ENCODE measurements at regions of chr10 and their contacts with region 1.

Region 1: GRCh38 chr10:17257466-17258321 is 29.7 kb downstream of the VIM start:
- DNase-seq: peak; percentile 49 to 71 (median 64)
- H3K4me3 ChIP-seq: no peak overlapping the region
- H3K4me3 Mint-ChIP-seq: peak overlapping the region in 1 of 8 donors; percentile 43
- H3K27ac ChIP-seq: no peak overlapping the region
- H3K27ac Mint-ChIP-seq: peak overlapping the region in 3 of 7 donors; percentile 0 to 84 (median 67)
- H3K4me1 ChIP-seq: no peaks in the 10 kb centered on the region
- H3K4me1 Mint-ChIP-seq: peaks cover 0 to 6% (median 4%) of the 10 kb centered on the region in 4 donors
- H3K27me3 ChIP-seq: no peaks in the 10 kb centered on the region
- H3K27me3 Mint-ChIP-seq: no peaks in the 10 kb centered on the region

Region 2: GRCh38 chr10:15879058-15879457 is 1378.6 kb before region 1 on chr10:
- CTCF ChIA-PET with region 1: no interaction called
- POLR2A ChIA-PET with region 1: no interaction called
- intact Hi-C with region 1: loop called (anchors 1 kb)
- DNase-seq: peak in 4 of 5 donors; percentile 21 to 39 (median 30)
- H3K4me3 ChIP-seq: no peak overlapping the region
- H3K4me3 Mint-ChIP-seq: no peak overlapping the region
- H3K27ac ChIP-seq: no peak overlapping the region
- H3K27ac Mint-ChIP-seq: no peak overlapping the region
- H3K4me1 ChIP-seq: no peaks in the 10 kb centered on the region
- H3K4me1 Mint-ChIP-seq: no peaks in the 10 kb centered on the region
- H3K27me3 ChIP-seq: peaks cover 3% of the 10 kb centered on the region
- H3K27me3 Mint-ChIP-seq: peaks cover 33 to 52% of the 10 kb centered on the region in 2 donors

Region 3: DNA sequence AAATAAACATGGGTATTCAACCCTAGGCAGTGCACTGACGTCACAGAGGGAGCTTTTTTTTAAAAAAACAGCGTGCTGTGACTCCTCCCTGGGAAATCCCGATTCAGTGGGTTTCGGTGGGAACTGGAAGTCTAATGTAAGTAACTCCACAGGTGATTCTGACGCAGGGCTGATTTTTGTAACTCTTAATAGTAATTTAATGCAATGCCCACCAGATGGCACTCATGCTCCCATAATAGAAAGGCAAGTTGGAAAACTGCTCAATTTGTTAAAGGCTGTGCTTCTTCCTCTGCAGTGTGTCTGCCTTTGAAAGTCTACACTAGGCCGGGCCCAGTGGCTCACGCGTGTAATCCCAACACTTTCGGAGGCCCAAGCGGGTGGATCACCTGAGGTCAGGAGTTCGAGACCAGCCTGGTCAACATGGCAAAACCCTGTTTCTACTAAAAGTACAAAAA is 429.6 kb before region 1 on chr10:
- CTCF ChIA-PET with region 1: interaction called, 43 read pairs
- POLR2A ChIA-PET with region 1: no interaction called
- intact Hi-C with region 1: loop called (anchors 1 kb)
- DNase-seq: peak; percentile 67 to 73 (median 71)
- H3K4me3 ChIP-seq: no peak overlapping the region
- H3K4me3 Mint-ChIP-seq: no peak overlapping the region
- H3K27ac ChIP-seq: no peak overlapping the region
- H3K27ac Mint-ChIP-seq: peak overlapping the region in 5 of 7 donors; percentile 15 to 88 (median 68)
- H3K4me1 ChIP-seq: no peaks in the 10 kb centered on the region
- H3K4me1 Mint-ChIP-seq: peaks cover 2 to 6% (median 5%) of the 10 kb centered on the region in 4 donors
- H3K27me3 ChIP-seq: no peaks in the 10 kb centered on the region
- H3K27me3 Mint-ChIP-seq: no peaks in the 10 kb centered on the region

Region 4: GRCh38 chr10:16856567-16856966 is 401.1 kb before region 1 on chr10:
- CTCF ChIA-PET with region 1: interaction called, 12 read pairs
- POLR2A ChIA-PET with region 1: no interaction called
- intact Hi-C with region 1: no loop called
- DNase-seq: no peak
- H3K4me3 ChIP-seq: no peak overlapping the region
- H3K4me3 Mint-ChIP-seq: no peak overlapping the region
- H3K27ac ChIP-seq: no peak overlapping the region
- H3K27ac Mint-ChIP-seq: no peak overlapping the region
- H3K4me1 ChIP-seq: no peaks in the 10 kb centered on the region
- H3K4me1 Mint-ChIP-seq: no peaks in the 10 kb centered on the region
- H3K27me3 ChIP-seq: no peaks in the 10 kb centered on the region
- H3K27me3 Mint-ChIP-seq: no peaks in the 10 kb centered on the region

Region 5: GRCh38 chr10:17273403-17273802 is 15.7 kb after region 1 on chr10:
- CTCF ChIA-PET with region 1: interaction called, 10 read pairs
- POLR2A ChIA-PET with region 1: no interaction called
- intact Hi-C with region 1: no loop called
- DNase-seq: no peak
- H3K4me3 ChIP-seq: no peak overlapping the region
- H3K4me3 Mint-ChIP-seq: no peak overlapping the region
- H3K27ac ChIP-seq: no peak overlapping the region
- H3K27ac Mint-ChIP-seq: no peak overlapping the region
- H3K4me1 ChIP-seq: no peaks in the 10 kb centered on the region
- H3K4me1 Mint-ChIP-seq: no peaks in the 10 kb centered on the region
- H3K27me3 ChIP-seq: no peaks in the 10 kb centered on the region
- H3K27me3 Mint-ChIP-seq: peaks cover 6 to 11% of the 10 kb centered on the region in 2 donors

Region 6: DNA sequence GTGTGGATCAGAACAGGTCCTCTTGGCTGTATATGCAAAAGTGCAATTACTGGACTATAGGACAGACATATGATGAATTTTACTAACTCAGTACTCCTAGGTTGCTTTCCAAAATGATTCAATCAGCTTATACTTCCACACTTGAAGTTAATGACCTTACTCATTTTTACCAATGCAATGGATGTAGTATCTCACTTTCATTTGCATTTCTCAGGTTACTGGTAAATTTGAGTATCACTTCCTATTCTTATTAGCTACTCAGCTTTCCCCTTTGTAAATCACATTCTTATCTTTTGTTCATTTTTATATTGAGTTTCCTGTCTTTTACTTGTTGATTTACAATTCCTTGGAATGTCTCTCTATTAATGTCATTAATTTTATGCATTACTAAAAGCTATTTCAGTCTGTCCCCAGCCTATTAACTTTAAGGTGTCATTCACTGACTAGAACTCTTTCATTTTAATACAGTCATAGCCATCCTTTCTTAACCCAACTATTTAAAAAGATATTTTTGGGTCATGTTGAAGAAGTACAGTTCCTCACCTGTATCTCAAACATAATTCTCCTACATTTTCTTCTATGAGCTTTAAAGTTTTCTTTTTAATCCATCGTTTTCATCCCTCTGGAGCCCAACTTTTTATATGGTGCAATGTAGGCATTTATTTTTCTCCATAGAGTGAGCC is 58.9 kb after region 1 on chr10:
- CTCF ChIA-PET with region 1: no interaction called
- POLR2A ChIA-PET with region 1: no interaction called
- intact Hi-C with region 1: no loop called
- DNase-seq: no peak
- H3K4me3 ChIP-seq: no peak overlapping the region
- H3K4me3 Mint-ChIP-seq: no peak overlapping the region
- H3K27ac ChIP-seq: no peak overlapping the region
- H3K27ac Mint-ChIP-seq: no peak overlapping the region
- H3K4me1 ChIP-seq: no peaks in the 10 kb centered on the region
- H3K4me1 Mint-ChIP-seq: no peaks in the 10 kb centered on the region
- H3K27me3 ChIP-seq: no peaks in the 10 kb centered on the region
- H3K27me3 Mint-ChIP-seq: peaks cover 6 to 11% of the 10 kb centered on the region in 2 donors

Region 7: DNA sequence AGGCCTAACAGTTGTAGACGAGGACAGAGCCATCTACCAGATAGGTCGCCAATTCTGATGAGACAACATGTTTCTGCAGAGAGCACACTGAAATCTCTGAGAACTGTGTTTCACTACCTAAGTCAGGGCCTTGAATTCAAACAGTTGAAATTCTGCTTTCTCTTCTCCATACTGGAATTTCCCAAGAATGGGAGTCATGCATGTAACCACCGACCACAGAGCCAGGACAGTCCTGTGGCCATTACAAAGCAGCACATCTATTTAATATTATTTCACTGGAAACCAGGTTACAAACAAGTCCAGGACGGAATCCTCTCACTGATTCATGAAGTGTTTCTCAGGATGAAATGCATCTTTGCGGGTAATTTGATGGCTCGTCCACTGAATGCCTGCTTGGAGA is 258.7 kb after region 1 on chr10:
- CTCF ChIA-PET with region 1: no interaction called
- POLR2A ChIA-PET with region 1: no interaction called
- intact Hi-C with region 1: no loop called
- DNase-seq: no peak
- H3K4me3 ChIP-seq: no peak overlapping the region
- H3K4me3 Mint-ChIP-seq: no peak overlapping the region
- H3K27ac ChIP-seq: no peak overlapping the region
- H3K27ac Mint-ChIP-seq: no peak overlapping the region
- H3K4me1 ChIP-seq: peaks cover 7% of the 10 kb centered on the region
- H3K4me1 Mint-ChIP-seq: peaks cover under 1 to 10% (median 8%) of the 10 kb centered on the region in 4 donors
- H3K27me3 ChIP-seq: no peaks in the 10 kb centered on the region
- H3K27me3 Mint-ChIP-seq: peaks cover 1 to 3% of the 10 kb centered on the region in 2 donors